Panc1 (cell line): ENCODE measurements at regions of chr10 and their contacts with region 1.

Region 1: DNA sequence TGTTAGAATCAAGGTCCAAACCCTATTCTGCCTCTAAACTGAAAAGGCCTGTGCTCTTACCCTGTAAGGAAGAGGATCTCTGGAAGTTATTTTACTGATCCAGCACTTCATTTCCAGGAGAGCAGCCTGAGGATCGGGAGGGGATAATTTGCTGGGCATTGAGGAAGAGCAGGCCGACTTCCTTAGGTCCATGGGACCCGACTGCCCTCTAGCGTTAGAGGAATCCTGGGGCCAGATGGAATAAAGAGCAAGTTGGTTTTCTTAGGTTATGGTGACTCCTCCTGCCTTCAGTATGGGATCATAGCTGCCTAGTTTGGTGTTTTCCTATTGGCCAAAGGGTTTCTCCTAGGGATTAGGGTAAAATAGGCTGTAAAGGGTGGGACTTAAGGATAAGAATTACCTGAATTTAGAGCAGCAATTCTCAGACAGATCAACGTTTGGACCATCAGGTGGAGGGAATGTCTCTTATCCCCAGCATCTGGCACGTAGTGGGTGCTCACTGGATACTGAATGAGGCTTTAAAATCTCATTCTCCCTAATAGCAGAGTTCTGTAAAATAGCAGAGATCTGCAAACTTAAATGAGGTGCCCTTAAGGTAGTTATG is 40.0 kb upstream of the SORBS1 start:
- DNase-seq: peak; percentile 73
- ATAC-seq: peak; percentile 96
- H3K4me3 ChIP-seq: no peak overlapping the region
- H3K27ac ChIP-seq: peak overlapping the region; percentile 2; the same call in 1 of the 2 replicates
- H3K4me1 ChIP-seq: 0 out of 2 replicates have a peak, but pooled peaks cover 2% of the 10 kb centered on the region
- H3K27me3 ChIP-seq: no peaks in the 10 kb centered on the region
- CTCF ChIP-seq: peak; percentile 98

Region 2: DNA sequence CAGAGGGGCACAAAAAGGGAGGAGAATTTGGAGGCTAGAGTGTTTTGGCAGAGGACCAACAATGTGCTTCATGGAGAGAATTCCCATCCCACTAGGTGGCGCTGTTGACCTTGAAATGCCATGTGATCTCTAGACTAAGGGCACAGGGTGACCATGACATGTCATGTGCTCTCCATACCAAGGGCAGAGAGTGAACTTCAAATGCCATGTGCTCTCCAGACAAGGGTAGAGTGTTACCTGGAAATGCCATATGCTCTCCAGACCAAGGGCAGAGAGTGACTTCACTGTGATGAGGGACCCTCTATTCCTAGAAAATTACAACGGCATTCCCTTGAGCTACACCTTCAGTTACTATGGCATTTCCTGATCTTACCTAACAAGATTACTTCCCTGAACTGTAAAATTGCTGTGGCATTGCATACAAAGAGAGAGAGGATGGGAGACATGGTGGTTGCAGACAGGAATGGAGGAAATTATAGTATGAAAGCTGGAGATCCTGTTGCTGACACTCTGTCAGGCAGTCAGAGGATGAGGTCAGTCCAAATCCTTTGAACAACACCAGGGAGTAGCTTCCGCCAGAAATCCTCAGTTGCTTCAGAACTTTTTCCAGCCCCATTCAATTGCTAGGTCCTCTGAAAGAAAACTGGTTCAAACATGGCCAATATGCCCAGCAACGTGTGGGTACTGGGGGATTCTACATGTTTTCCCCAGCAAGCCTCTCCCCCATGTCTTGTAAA is 468.0 kb before region 1 on chr10:
- CTCF ChIA-PET with region 1: no interaction called
- POLR2A ChIA-PET with region 1: no interaction called
- in situ Hi-C with region 1: no loop called
- intact Hi-C with region 1: loop called (anchors 10 kb)
- DNase-seq: peak; percentile 66
- ATAC-seq: peak; percentile 90
- H3K4me3 ChIP-seq: no peak overlapping the region
- H3K27ac ChIP-seq: no peak overlapping the region
- H3K4me1 ChIP-seq: no peaks in the 10 kb centered on the region
- H3K27me3 ChIP-seq: no peaks in the 10 kb centered on the region
- CTCF ChIP-seq: peak; percentile 87

Region 3: GRCh38 chr10:95374597-95375209 is 226.5 kb before region 1 on chr10:
- CTCF ChIA-PET with region 1: interaction called, 12 read pairs
- POLR2A ChIA-PET with region 1: no interaction called
- in situ Hi-C with region 1: no loop called
- intact Hi-C with region 1: loop called (anchors 1 kb)
- DNase-seq: peak; percentile 43
- ATAC-seq: peak; percentile 100
- H3K4me3 ChIP-seq: no peak overlapping the region
- H3K27ac ChIP-seq: no peak overlapping the region
- H3K4me1 ChIP-seq: 0 out of 2 replicates have a peak, but pooled peaks cover 2% of the 10 kb centered on the region
- H3K27me3 ChIP-seq: peaks cover 2% of the 10 kb centered on the region; the same call in 1 of the 2 replicates
- CTCF ChIP-seq: peak; percentile 97

Region 4: DNA sequence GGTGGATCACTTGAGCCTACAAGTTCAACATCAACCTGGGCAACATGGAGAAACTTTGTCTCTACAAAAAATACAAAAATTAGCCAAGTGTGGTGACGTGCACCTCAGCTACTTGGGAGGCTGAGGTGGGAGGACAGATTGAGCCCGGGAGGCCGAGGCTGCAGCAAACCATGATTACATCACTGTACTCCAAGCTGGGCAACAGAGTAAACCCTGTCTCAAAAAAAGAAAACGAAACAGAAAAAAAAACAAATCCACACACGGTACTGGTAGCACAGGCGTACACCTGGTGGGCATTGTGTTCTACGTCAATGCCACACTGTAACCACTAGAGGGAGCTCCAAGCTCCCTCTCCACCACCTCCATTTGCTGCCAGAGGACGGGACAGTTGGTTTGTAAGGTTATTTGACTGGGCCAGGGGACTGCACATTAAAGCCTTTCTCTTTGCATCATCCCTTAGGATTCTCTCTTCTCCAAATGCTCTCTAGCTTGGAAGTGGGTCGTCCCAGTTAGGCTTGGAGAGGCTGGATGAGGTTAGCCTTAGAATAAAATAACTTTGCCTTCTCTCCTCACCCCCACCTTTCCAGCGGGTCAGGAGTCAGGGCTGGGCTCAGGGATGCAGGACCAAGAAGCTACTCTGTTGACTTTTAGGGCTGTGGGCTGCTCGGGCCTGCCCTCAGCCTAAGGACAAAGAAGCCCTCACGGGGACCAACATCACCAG is 170.8 kb before region 1 on chr10:
- CTCF ChIA-PET with region 1: interaction called, 21 read pairs
- POLR2A ChIA-PET with region 1: interaction called, 6 read pairs
- in situ Hi-C with region 1: no loop called
- intact Hi-C with region 1: loop called (anchors 1 kb)
- DNase-seq: peak; percentile 60
- ATAC-seq: peak; percentile 94
- H3K4me3 ChIP-seq: no peak overlapping the region
- H3K27ac ChIP-seq: peak overlapping the region; percentile 44; the same call in 1 of the 2 replicates
- H3K4me1 ChIP-seq: peaks cover 5% of the 10 kb centered on the region; the same call in 1 of the 2 replicates
- H3K27me3 ChIP-seq: no peaks in the 10 kb centered on the region
- CTCF ChIP-seq: peak; percentile 98